ENCODE measurements at regions of chr5 and their contacts with region 1.

Region 1: DNA sequence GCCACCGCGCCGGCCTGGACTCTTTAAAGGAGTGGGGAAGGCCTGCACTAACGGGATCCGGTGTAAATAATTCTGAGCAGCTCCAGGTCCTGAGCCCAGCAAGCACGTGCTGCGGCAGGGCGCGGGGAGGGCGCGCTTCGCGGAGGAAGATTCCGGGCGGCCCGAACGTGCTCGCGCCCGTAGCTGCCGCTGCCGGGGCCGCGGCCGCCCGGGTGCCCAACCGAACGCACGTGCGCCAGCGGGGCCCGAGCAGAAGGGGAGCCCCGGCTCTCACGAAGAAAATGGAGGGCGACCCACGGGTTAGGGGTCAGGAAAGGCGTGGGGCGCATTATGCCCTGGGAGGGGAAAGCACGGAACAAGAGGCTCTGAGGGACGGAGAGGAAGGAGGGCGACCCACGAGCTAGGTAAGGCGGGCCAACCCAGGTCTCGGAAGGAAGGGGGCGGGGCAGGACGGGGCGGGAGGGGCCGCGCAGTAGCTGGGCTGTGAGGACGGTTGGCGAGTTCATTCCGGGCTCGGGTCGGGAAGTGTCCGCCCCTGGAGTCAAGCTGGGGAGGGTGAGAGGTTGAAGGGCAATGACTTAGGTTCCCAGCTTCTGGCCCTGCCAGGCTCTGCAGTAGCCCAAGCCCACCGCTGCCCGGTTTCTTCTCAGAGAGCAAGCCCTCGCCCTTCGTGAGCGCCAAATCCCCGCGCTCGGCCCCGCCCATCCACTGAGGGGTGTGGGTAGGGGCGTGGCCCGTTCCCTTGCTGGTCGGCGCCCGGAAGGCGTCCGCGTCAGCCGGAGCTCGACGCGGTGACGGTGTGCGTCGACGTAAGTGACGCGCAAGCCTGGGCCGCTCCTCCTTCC is at the start of gene ZNF131:
- DNase-seq: peak; percentile 97
- H3K4me3 Mint-ChIP-seq: peak within 1 kb of the TSS; percentile 94
- H3K27ac Mint-ChIP-seq: peak within 1 kb of the TSS; percentile 93
- H3K4me1 Mint-ChIP-seq: peaks cover 39% of the 10 kb centered on the region
- H3K27me3 Mint-ChIP-seq: peaks cover 3% of the 10 kb centered on the region
- total RNA-seq, gene ZNF131: 42.5 to 44.7 TPM

Region 2: DNA sequence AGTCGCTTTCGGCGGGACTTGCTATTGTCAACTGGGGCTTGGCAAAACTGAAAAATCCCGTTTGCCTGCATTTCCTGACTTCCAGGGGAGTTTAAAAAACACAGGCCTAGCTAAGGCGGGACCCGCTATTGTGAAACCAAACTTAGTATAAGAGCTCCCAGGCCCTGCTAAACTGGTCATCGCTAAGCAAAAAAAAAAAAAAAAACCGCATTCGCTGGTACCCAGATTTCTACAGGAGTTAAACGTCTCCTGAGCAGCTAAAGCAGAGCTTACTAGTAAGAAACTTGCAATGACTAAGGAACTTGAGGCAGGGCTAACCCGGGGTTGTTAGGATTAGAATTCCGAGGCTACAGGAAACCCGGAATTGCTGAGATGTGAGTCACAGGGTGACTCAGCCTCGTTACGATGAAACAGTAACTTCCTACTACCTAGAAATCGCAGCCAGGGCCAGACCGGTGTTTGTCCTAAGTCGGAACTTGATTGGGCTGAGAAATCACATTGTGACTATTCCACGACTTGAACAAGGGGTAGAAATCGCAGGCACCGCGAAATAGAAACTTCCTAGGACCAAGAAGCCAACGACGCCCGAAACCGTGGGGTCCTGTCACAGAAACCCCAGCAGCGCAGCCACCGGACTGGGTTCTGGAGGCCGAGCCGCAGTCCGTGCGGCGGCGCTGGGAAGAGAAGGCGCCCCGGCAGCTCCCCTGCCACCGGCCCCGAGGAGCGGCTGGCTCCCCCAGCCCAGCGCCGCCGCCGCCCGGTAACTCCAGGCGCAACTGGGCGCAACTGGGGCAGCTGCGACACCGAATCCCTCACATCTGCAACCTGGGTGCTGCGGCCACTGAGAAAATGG is 170.3 kb before region 1 on chr5:
- CTCF ChIA-PET with region 1: interaction called, 3 read pairs
- POLR2A ChIA-PET with region 1: interaction called, 32 read pairs
- DNase-seq: peak; percentile 77
- H3K4me3 Mint-ChIP-seq: peak overlapping the region; percentile 85
- H3K27ac Mint-ChIP-seq: peak overlapping the region; percentile 100
- H3K4me1 Mint-ChIP-seq: peaks cover 37% of the 10 kb centered on the region
- H3K27me3 Mint-ChIP-seq: no peaks in the 10 kb centered on the region

Region 3: GRCh38 chr5:43019614-43020293 is 101.2 kb before region 1 on chr5:
- CTCF ChIA-PET with region 1: interaction called, 11 read pairs
- POLR2A ChIA-PET with region 1: interaction called, 65 read pairs
- DNase-seq: peak; percentile 90
- H3K4me3 Mint-ChIP-seq: peak overlapping the region; percentile 93
- H3K27ac Mint-ChIP-seq: peak overlapping the region; percentile 99
- H3K4me1 Mint-ChIP-seq: peaks cover 42% of the 10 kb centered on the region
- H3K27me3 Mint-ChIP-seq: no peaks in the 10 kb centered on the region

Region 4: DNA sequence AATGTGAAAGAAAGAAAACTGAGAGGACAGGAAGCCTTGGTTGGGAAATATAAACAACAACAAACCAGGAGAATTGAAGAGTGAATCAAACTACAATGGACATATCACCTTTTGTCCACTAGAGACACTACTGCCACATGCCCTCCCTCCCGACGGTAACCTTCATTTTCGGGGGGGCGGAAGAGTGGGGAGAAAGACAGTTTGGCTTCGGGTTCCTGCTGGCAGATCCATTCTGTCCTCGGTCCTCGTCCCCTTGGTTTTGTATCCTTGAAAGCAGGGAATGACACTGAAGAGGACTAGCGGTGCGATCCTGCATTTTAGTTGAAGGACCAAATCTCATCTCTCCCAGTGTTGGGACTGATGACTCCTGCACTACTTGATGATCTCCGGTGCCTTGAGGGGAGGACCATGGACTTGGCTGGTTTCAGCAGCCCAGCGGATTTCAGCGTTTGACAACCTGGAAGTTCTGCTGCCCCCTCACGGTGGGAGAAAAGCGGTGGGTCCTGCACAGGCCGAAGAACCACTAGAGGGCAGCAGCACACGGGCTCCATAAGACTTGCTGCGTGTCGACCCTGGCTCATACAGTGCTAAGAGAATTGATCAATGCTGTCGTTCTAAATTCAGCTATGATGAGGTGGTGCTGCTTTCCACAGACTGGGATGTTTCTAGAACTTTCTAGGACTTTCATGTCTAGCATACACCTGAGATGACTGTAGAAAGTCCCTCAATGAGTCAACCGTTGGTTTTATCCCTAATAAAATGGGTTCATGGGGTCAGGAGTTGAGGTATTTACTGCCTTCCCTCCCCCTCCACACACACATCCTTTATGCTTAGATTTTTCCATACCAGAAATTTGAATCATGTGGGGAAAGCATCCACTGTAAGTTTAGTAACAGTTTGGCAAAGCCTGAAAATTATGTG is 15.3 kb before region 1 on chr5:
- CTCF ChIA-PET with region 1: interaction called, 163 read pairs
- POLR2A ChIA-PET with region 1: interaction called, 157 read pairs
- DNase-seq: peak; percentile 90
- H3K4me3 Mint-ChIP-seq: peak overlapping the region; percentile 78
- H3K27ac Mint-ChIP-seq: peak overlapping the region; percentile 83
- H3K4me1 Mint-ChIP-seq: peaks cover 45% of the 10 kb centered on the region
- H3K27me3 Mint-ChIP-seq: no peaks in the 10 kb centered on the region

Region 5: GRCh38 chr5:43231977-43232376 is 111.0 kb after region 1 on chr5:
- CTCF ChIA-PET with region 1: no interaction called
- POLR2A ChIA-PET with region 1: no interaction called
- DNase-seq: no peak
- H3K4me3 Mint-ChIP-seq: no peak overlapping the region
- H3K27ac Mint-ChIP-seq: no peak overlapping the region
- H3K4me1 Mint-ChIP-seq: peaks cover 5% of the 10 kb centered on the region
- H3K27me3 Mint-ChIP-seq: peaks cover 2% of the 10 kb centered on the region

Region 6: GRCh38 chr5:43286623-43287022 is 165.7 kb after region 1 on chr5:
- CTCF ChIA-PET with region 1: no interaction called
- POLR2A ChIA-PET with region 1: no interaction called
- DNase-seq: no peak
- H3K4me3 Mint-ChIP-seq: no peak overlapping the region
- H3K27ac Mint-ChIP-seq: no peak overlapping the region
- H3K4me1 Mint-ChIP-seq: peaks cover 14% of the 10 kb centered on the region
- H3K27me3 Mint-ChIP-seq: no peaks in the 10 kb centered on the region

Region 7: GRCh38 chr5:43313035-43313853 is 192.3 kb after region 1 on chr5 and contains the start of gene HMGCS1:
- CTCF ChIA-PET with region 1: interaction called, 5 read pairs
- POLR2A ChIA-PET with region 1: interaction called, 74 read pairs
- DNase-seq: peak; percentile 99
- H3K4me3 Mint-ChIP-seq: peak within 1 kb of the TSS; percentile 99
- H3K27ac Mint-ChIP-seq: peak within 1 kb of the TSS; percentile 85
- H3K4me1 Mint-ChIP-seq: peaks cover 73% of the 10 kb centered on the region
- H3K27me3 Mint-ChIP-seq: no peaks in the 10 kb centered on the region
- total RNA-seq, gene HMGCS1: 150 to 155 TPM